Caco-2 (cell line): ENCODE measurements at regions of chr10 and their contacts with region 1.

Region 1: DNA sequence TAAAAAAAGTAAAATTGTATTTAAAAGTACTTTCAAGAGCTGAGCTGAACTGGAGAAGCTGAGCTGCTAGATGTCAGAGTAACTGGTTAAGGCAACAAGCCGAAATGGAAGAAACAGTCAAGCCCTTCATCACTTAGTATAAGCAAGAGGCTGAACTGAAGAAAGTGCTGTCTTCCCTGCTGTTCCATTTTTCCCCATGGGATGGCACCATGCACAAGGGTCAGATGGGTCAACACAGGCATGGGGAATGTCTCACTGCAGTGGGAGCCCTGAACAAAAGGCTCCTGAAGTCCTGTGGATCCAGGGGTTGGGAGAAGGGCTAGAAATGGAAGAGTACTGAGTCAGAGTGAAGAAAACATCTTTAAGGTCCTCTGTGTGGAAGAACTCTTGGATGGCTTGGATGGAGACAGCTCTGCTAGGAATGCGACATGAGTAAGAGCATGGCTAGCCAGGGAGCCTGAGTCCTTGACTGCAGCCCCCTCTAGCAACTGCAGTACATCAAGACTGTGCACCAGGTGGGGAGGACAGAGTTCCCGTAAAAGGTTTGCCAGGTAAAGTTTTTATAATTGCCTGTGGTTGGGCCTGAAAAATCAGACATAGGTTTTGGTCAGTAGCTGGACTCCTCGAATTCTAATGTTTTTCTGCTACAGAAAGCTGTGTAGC is 348.3 kb downstream of the GPR158 start:
- DNase-seq: peak; percentile 50 to 51
- H3K4me3 ChIP-seq: no peak overlapping the region
- H3K4me3 Mint-ChIP-seq: no peak overlapping the region
- H3K27ac Mint-ChIP-seq: no peak overlapping the region
- H3K4me1 ChIP-seq: no peaks in the 10 kb centered on the region
- H3K4me1 Mint-ChIP-seq: no peaks in the 10 kb centered on the region
- H3K27me3 ChIP-seq: no peaks in the 10 kb centered on the region; the same call in 1 of the 2 replicates
- H3K27me3 Mint-ChIP-seq: no peaks in the 10 kb centered on the region
- CTCF ChIP-seq: peak; percentile 28 to 34

Region 2: DNA sequence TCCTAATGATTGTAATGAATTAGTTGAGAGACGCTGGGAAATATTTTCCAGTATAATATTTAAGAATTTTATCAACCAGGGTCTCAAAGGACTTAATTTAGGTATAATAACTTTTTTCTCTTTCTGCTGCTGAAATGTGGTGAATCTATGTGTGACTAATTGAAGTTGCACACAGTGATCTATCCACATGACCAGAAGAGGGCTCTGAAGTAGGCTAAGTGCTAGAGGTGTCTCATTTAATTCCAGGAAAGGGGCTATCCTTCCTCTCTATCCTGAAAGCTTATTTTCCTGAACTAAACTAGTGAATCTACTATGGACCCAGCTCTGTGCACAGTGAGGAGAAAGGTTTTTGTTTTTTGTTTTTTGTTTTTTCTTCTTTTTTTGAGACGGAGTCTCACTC is 116.6 kb after region 1 on chr10:
- CTCF ChIA-PET with region 1: no interaction called
- POLR2A ChIA-PET with region 1: no interaction called
- intact Hi-C with region 1: loop called (anchors 5 kb)
- DNase-seq: no peak
- H3K4me3 ChIP-seq: no peak overlapping the region
- H3K4me3 Mint-ChIP-seq: no peak overlapping the region
- H3K27ac Mint-ChIP-seq: no peak overlapping the region
- H3K4me1 ChIP-seq: no peaks in the 10 kb centered on the region
- H3K4me1 Mint-ChIP-seq: peaks cover 6% of the 10 kb centered on the region
- H3K27me3 ChIP-seq: no peaks in the 10 kb centered on the region
- H3K27me3 Mint-ChIP-seq: peaks cover 15% of the 10 kb centered on the region
- CTCF ChIP-seq: no peak

Region 3: DNA sequence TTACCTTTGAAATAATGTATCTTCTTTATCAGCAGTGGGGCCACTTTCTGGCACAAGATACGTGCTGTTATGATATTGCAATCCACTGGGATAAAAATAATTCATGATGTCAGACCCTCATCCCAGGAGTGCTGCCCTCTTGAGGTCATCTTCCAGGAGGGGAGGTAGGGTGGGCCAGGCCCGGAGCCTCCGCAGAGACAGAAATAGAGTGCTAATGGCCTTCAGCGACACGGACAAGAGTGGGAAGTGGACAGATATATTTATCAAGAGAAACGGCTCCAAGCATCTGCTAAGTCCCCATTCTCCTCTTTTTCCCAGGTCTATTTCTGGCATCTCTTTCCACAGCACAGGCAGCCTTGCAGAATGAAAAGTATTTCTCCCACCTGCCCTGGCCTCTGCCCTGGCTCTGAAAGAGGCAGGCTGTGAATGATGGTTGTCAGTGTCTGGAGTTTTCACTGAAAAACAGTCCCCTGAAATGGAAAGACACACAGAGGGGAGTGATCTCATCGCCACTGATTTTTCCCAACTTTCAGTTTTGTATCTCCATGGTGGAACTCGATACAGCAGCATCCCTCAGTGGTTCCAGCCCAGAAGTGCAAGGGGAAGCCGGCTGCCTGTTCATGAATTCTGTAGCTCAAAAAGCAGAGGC is 159.2 kb after region 1 on chr10:
- CTCF ChIA-PET with region 1: no interaction called
- POLR2A ChIA-PET with region 1: no interaction called
- intact Hi-C with region 1: loop called (anchors 5 kb)
- DNase-seq: peak in 1 of 2 experiments; percentile 26
- H3K4me3 ChIP-seq: no peak overlapping the region
- H3K4me3 Mint-ChIP-seq: no peak overlapping the region
- H3K27ac Mint-ChIP-seq: no peak overlapping the region
- H3K4me1 ChIP-seq: no peaks in the 10 kb centered on the region
- H3K4me1 Mint-ChIP-seq: no peaks in the 10 kb centered on the region
- H3K27me3 ChIP-seq: no peaks in the 10 kb centered on the region
- H3K27me3 Mint-ChIP-seq: peaks cover 9% of the 10 kb centered on the region
- CTCF ChIP-seq: peak in 1 of 2 experiments; percentile 52

Region 4: GRCh38 chr10:26225322-26225721 is 702.2 kb after region 1 on chr10:
- CTCF ChIA-PET with region 1: no interaction called
- POLR2A ChIA-PET with region 1: no interaction called
- intact Hi-C with region 1: no loop called
- DNase-seq: no peak
- H3K4me3 ChIP-seq: no peak overlapping the region
- H3K4me3 Mint-ChIP-seq: no peak overlapping the region
- H3K27ac Mint-ChIP-seq: no peak overlapping the region
- H3K4me1 ChIP-seq: peaks cover 9% of the 10 kb centered on the region; the same call in 1 of the 2 replicates
- H3K4me1 Mint-ChIP-seq: peaks cover 14% of the 10 kb centered on the region
- H3K27me3 ChIP-seq: 0 out of 2 replicates have a peak, but pooled peaks cover 3% of the 10 kb centered on the region
- H3K27me3 Mint-ChIP-seq: peaks cover 12% of the 10 kb centered on the region
- CTCF ChIP-seq: no peak